Sigmoid colon (tissue), 7 donors: ENCODE measurements at regions of chr3 and their contacts with region 1.

Region 1: DNA sequence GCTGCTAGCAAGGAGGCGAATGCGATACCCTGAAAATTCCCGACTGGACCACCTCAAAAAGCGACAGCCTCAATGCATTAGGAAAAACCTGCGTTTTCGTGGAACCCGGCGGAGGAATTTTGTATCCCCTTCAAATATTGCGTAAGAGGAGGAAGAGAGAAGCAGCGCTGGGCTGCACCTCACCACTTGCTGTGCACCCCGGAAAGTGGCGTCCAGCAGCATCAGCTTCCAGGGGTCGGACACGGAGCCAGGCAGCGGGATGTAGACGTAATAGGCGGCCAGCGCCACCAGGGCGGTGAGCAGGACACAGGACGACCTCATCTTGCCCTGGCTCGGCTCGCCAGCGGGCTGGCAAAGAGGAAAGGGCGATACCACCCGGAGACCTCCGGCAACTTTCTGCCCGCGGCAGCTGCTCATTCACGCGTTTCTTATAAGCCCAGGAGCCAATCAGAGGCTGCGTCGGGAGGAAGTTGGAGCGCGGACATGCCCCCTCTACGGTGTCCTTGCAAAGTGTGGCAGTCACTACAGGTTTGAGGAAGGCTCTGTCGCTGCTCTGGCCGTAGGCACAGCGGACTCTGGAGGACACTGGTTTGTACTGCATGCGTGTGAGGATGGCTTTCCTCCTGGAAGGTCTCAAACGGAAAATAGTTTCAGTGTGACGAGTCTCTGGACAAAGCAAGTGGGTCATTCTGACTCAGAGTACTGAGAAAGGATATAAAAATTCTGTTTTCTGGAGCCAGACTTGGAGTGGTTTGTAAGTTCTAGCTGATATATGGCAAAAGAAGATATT is at the start of gene NCEH1:
- DNase-seq: peak; percentile 95
- H3K4me3 ChIP-seq: peak within 1 kb of the TSS; percentile 52 to 89 (median 66)
- H3K27ac ChIP-seq: peak within 1 kb of the TSS; percentile 88 to 95 (median 90)
- H3K4me1 ChIP-seq: peaks cover 0 to 21% (median 17%) of the 10 kb centered on the region in 4 donors
- H3K27me3 ChIP-seq: no peaks in the 10 kb centered on the region
- CTCF ChIP-seq: peak; percentile 53 to 82 (median 74)
- EP300 ChIP-seq: peak in 1 of 4 donors; percentile 19
- POLR2A ChIP-seq: peak; percentile 37 to 72
- total RNA-seq, gene NCEH1: 1.6 to 3.6 (median 2.4) TPM

Region 2: DNA sequence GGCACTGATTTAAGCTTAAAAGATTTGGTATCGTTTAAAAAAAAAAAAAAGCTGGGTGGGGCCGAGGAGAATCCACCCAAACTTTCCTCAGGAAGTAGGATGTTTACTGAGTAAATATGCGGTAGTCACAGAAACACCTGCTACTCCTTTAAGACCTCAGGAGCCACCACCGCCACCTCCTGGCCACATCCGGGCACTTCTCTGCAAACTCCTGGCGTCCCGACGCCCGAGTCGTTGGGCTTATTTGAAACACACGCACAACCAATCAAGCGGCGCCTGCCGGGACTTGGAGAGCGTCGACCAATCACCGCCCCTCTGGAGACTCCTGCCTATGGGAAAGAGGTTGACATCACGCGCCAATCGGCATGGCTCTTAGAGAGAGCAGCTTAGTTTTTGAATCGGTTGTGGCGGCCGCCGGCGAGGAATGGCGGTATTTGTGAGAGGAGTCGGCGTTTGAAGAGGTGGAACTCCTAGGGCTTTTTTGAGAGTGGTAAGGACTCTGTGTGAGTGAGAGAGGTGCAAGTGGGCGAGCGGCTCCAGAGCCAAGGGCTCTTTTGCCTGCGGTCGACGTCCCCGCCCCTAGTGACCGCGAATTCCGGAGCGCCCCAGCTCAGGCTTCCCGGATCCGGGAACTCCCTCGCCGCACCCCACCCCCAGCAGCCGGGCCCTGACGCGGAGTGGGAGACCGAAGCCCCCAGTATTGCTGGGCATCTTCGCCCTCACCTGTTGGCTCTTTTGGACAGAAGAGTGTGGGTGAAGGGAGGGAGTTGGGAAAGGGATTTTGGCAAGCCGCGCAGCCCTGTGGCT is 39.7 kb after region 1 on chr3 and contains the start of gene ECT2:
- intact Hi-C with region 1: loop called (anchors 1 kb)
- DNase-seq: peak; percentile 99
- H3K4me3 ChIP-seq: peak within 1 kb of the TSS; percentile 58 to 92 (median 72)
- H3K27ac ChIP-seq: peak within 1 kb of the TSS; percentile 67 to 81 (median 74)
- H3K4me1 ChIP-seq: peaks cover 0 to 18% (median 14%) of the 10 kb centered on the region in 4 donors
- H3K27me3 ChIP-seq: no peaks in the 10 kb centered on the region
- CTCF ChIP-seq: peak; percentile 31 to 66 (median 50)
- EP300 ChIP-seq: no peak
- POLR2A ChIP-seq: no peak
- total RNA-seq, gene ECT2: 3.3 to 21.9 (median 6.8) TPM